Activated B cell treated with CpG ODN at 0.5 μM for 24 hours (primary cell): ENCODE measurements at regions of chr4 and their contacts with region 1.

Region 1: DNA sequence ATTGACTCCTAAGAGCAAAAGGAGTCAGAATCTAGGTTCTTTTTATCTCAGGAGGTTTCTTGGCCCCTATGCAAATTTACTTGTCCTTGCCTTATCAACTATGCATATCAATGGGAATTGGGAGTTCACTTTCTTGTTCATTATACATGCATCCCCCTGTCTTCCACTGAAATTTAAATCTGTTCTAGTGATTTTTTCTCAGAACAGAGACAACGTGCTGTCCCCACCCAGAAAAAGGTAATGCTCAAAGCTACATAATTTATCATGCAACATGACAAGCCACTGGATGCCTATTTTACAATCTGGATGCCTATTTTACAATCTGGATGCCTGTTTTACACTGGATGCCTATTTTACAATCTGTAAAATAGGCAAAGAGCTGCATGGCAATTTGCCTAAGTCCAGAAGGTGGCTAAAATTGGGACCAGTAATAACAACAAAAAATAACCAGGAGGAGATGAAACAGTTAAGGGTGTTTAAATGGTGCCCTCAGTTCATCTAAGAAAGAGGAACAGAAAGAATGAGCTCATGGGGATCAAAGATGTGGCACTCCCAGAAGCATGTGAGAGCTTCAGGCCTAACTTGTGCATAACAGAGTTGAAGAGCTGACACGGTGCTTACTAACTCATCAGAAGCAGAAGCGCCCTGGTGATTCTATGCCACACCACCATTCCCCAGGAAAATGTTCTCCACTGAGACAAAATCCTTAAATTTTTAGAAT is 537.9 kb upstream of the BOD1L1 start:
- DNase-seq: no peak
- ATAC-seq: peak; percentile 99
- H3K4me3 Mint-ChIP-seq: peak overlapping the region; percentile 69
- H3K27ac Mint-ChIP-seq: peak overlapping the region; percentile 86
- H3K4me1 Mint-ChIP-seq: peaks cover 31% of the 10 kb centered on the region
- H3K27me3 Mint-ChIP-seq: no peaks in the 10 kb centered on the region
- CTCF ChIP-seq: no peak

Region 2: GRCh38 chr4:14149176-14150053 is 16.0 kb before region 1 on chr4:
- CTCF ChIA-PET with region 1: no interaction called
- POLR2A ChIA-PET with region 1: no interaction called
- intact Hi-C with region 1: loop called (anchors 2 kb)
- DNase-seq: no peak
- ATAC-seq: no peak
- H3K4me3 Mint-ChIP-seq: no peak overlapping the region
- H3K27ac Mint-ChIP-seq: no peak overlapping the region
- H3K4me1 Mint-ChIP-seq: peaks cover 31% of the 10 kb centered on the region
- H3K27me3 Mint-ChIP-seq: no peaks in the 10 kb centered on the region
- CTCF ChIP-seq: no peak

Region 3: GRCh38 chr4:14178421-14178820 is 13.0 kb after region 1 on chr4:
- CTCF ChIA-PET with region 1: interaction called, 4 read pairs
- POLR2A ChIA-PET with region 1: interaction called, 27 read pairs
- intact Hi-C with region 1: loop called (anchors 1 kb)
- DNase-seq: no peak
- ATAC-seq: peak; percentile 62
- H3K4me3 Mint-ChIP-seq: peak overlapping the region; percentile 67
- H3K27ac Mint-ChIP-seq: peak overlapping the region; percentile 89
- H3K4me1 Mint-ChIP-seq: peaks cover 85% of the 10 kb centered on the region
- H3K27me3 Mint-ChIP-seq: no peaks in the 10 kb centered on the region
- CTCF ChIP-seq: no peak